Breast epithelium (tissue), 4 donors: ENCODE measurements at regions of chr2 and their contacts with region 1.

Region 1: GRCh38 chr2:184527058-184527457 is 71.3 kb upstream of the ZNF804A start:
- DNase-seq: no peak
- H3K4me3 ChIP-seq: no peak overlapping the region
- H3K27ac ChIP-seq: no peak overlapping the region
- H3K4me1 ChIP-seq: no peaks in the 10 kb centered on the region
- H3K27me3 ChIP-seq: no peaks in the 10 kb centered on the region
- CTCF ChIP-seq: no peak
- POLR2A ChIP-seq: no peak

Region 2: DNA sequence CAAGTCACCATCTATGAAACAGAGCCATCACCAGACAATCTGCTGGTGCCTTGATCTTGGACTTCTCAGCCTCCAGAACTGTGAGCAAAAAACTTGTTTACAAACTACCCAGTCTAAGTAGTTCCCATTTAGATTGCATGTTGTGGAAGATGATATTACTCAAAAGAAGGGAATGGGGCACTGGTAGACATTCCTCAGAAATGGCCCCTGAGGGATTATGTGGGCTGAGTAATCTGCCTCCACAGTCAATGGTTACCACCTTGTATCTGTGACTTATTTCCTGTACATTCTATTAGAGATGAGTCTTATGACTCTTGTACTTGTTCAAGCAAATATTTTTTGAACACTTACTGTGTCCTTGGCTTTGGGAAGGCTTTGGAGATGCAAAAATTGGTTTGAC is 1242.5 kb before region 1 on chr2:
- intact Hi-C with region 1: loop called (anchors 5 kb)
- DNase-seq: no peak
- H3K4me3 ChIP-seq: no peak overlapping the region
- H3K27ac ChIP-seq: no peak overlapping the region
- H3K4me1 ChIP-seq: no peaks in the 10 kb centered on the region
- H3K27me3 ChIP-seq: no peaks in the 10 kb centered on the region
- CTCF ChIP-seq: no peak
- POLR2A ChIP-seq: no peak